ENCODE measurements at regions of chr11 and their contacts with region 1.

Region 1: GRCh38 chr11:73307323-73308002 is 613 bp upstream of the ARHGEF17 start:
- DNase-seq: peak; percentile 98 to 100
- ATAC-seq: peak; percentile 83
- H3K4me3 ChIP-seq: peak overlapping the region; percentile 46 to 91
- H3K27ac ChIP-seq: peak overlapping the region in 1 of 2 donors; percentile 72
- H3K4me1 ChIP-seq: no peaks in the 10 kb centered on the region
- H3K27me3 ChIP-seq: no peaks in the 10 kb centered on the region

Region 2: DNA sequence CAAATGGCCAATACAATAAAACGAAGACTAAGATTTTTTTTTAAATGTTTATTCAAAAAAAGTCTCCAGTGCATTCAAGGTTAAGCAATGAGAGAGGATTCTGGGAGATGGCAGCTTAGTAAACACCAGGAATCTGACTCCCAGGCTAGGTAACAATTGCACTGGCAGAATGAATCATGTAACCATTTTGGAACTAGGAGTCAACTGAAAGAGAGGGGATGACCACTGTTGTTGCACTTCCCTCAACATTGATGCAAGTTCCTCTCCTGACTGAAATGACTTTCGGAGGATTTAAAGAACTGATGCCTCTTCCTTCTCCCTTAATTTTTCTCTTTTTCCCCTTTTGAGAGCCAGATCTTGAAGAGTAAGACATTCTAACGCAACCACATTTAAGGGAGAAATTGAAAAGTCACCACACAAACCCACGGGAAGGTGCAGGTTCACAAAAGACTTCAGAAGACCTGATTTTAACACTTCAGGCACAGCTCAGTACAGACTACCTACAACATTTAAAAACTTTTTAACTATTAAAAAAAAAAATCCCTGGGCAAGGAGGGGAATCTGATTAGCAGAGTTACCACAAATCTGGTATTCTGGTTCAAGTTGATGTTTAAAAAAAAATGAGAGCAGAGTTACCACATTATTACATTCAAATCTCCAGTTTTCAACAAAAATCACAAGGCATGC is 222.1 kb before region 1 on chr11:
- intact Hi-C with region 1: no loop called
- DNase-seq: no peak
- ATAC-seq: no peak
- H3K4me3 ChIP-seq: no peak overlapping the region
- H3K27ac ChIP-seq: no peak overlapping the region
- H3K4me1 ChIP-seq: peaks cover 1 to 6% of the 10 kb centered on the region in 2 donors
- H3K27me3 ChIP-seq: no peaks in the 10 kb centered on the region

Region 3: DNA sequence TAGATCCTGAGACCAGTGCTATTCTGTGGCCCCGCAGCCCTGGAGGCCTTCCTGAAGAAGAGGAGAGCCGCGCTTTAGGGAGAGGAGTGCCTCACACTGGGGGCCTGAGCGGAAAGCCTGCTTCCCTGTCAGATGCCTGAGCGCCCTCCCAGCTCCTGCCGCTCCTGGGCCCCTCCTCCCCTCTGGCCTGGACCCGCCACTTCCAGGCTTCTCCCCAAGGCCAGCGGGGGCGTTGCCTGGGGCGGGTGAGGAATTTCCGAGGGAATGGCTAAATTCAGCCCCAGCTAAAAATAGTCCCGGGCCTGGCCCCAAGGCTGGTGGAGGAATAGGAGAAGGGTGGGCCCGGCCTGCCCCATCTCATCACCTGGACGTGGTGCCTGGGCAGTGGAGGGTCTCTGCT is 16.0 kb after region 1 on chr11:
- intact Hi-C with region 1: loop called in 1 of 2 experiments (anchors 2 kb)
- DNase-seq: peak; percentile 96 to 98
- ATAC-seq: peak; percentile 84
- H3K4me3 ChIP-seq: no peak overlapping the region
- H3K27ac ChIP-seq: peak overlapping the region; percentile 98 to 99
- H3K4me1 ChIP-seq: peaks cover 4 to 12% of the 10 kb centered on the region in 2 donors
- H3K27me3 ChIP-seq: no peaks in the 10 kb centered on the region

Region 4: DNA sequence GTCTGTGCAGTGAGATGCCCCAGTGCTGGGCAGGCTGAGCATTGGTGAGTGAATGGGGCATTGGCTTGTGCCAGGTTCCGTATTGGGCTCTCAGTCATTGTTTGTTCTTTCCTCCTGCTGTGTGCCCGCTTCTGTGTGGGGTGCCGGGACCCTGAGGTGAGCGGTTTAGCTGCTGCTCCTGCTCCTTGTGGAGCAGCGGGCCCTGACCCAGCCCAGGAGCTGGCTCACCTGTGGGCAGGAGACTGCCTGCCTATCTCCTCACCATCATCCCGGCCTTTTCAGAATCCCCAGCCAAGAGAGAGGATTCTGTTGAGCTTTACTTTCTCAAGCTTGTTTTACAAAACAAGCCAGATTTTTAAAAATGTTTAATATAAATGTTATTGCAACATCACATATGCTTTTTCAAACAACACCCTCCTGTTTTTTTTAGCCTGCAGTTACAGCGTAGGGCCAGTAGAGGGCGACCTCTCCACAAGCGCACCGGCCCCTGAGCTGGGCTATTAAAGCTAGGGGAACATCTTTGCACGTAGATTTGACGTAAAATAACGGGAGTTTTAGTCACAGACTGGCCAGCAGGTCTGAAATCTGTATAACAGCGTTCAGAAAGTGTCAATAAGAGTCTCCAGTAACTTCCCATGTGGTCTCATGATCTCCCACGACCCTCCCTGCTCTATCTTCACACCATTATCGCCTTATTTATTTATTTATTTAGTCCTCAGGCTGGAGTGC is 43.6 kb after region 1 on chr11:
- intact Hi-C with region 1: no loop called
- DNase-seq: no peak
- ATAC-seq: peak; percentile 81
- H3K4me3 ChIP-seq: no peak overlapping the region
- H3K27ac ChIP-seq: no peak overlapping the region
- H3K4me1 ChIP-seq: no peaks in the 10 kb centered on the region
- H3K27me3 ChIP-seq: no peaks in the 10 kb centered on the region

Region 5: GRCh38 chr11:73412308-73412707 is 104.8 kb after region 1 on chr11:
- intact Hi-C with region 1: no loop called
- DNase-seq: no peak
- ATAC-seq: no peak
- H3K4me3 ChIP-seq: no peak overlapping the region
- H3K27ac ChIP-seq: no peak overlapping the region
- H3K4me1 ChIP-seq: peaks cover 0 to 1% of the 10 kb centered on the region in 2 donors
- H3K27me3 ChIP-seq: no peaks in the 10 kb centered on the region

Measured in aorta (tissue), 5 donors.